ENCODE measurements at regions of chr16 and their contacts with region 1.

Region 1: GRCh38 chr16:66824006-66824405 is 6.8 kb downstream of the NAE1 start:
- DNase-seq: no peak
- H3K4me3 ChIP-seq: no peak overlapping the region
- H3K27ac ChIP-seq: no peak overlapping the region
- H3K4me1 ChIP-seq: no peaks in the 10 kb centered on the region
- H3K27me3 ChIP-seq: no peaks in the 10 kb centered on the region
- CTCF ChIP-seq: no peak
- EP300 ChIP-seq: no peak
- POLR2A ChIP-seq: no peak
- RAD21 ChIP-seq: no peak

Region 2: DNA sequence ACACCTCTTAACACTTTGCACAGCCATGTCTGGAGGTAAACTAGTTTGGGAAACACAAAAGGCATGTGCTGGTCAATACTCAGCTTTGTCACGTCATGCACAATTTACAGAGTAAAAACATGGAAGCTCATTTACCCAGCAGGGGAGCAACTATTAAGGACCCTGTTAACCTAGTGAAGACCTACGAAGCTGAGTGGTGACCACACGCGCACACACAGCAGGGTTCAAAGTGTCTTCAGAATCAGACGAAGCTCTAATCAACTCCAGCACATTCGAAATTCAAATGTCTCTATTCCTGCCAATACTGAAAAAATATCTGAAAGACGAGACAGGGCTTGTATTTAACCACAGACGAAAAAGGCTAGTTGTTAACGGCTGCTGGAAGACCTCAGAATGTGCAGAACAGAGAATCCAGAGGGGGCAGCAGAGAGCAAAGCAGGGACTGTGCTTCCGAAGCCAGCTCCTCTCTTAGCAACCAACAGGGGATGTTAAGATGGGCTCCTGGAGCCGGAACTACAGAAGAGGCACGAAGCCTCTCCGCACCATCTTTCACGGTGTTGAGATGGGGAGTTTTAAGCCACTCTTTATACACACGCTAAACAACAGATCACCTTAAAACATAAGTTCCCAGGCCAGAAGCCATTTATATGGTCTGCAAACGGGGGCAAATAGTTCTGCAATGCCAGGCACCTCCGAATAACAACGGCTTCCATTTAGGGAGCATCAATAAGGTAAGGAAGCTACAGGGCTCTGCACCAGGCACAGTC is 173.1 kb before region 1 on chr16:
- CTCF ChIA-PET with region 1: no interaction called
- POLR2A ChIA-PET with region 1: no interaction called
- DNase-seq: peak; percentile 68 to 89
- H3K4me3 ChIP-seq: peak overlapping the region in 3 of 4 experiments; percentile 5 to 47 (median 27); a peak in 4 of 8 replicates
- H3K27ac ChIP-seq: no peak overlapping the region
- H3K4me1 ChIP-seq: peaks cover 0 to 5% (median 3%) of the 10 kb centered on the region in 4 experiments; a peak in 3 of 7 replicates
- H3K27me3 ChIP-seq: no peaks in the 10 kb centered on the region
- CTCF ChIP-seq: peak; percentile 80 to 98 (median 96)
- EP300 ChIP-seq: no peak
- POLR2A ChIP-seq: no peak
- RAD21 ChIP-seq: peak; percentile 53 to 69; a peak in 3 of 4 replicates

Region 3: DNA sequence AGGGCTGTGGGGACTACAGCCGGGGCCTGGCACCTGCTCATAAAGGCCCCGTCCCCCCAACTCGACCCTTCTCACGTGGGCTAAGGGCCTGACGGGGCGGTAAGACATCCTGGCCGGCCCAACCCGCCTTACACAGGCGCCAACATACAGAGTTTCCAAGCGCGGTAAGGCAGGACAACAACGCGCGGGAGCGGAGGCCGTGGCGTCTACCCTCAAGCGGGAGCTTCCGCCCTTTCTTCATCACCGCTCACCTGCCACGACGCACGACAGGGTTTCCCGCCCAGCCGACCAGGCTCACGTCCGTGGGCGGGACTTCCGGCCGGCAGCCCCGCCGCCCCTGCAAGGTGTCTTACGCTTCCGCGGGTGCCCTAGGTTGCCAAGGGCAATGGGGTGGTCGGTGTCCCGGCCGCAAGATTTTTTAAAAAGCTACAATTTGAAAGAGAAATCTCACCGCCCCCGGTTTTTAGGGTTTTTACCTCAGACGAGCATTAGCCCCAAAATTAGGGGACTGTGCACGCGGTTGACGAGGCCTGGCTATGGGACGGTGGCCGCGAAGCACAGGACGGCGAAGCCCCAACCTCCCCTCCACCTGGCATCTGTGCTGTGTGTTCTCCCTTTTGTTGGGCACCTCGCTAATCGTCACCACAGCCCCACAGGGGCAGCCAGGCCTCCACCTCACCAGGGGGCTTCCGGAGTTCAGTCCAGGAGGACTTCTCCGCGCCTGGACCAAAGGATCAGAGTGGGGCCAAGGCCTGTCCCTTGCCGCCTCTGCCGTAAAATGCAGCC is 22.5 kb before region 1 on chr16 and contains the start of gene TERB1:
- CTCF ChIA-PET with region 1: interaction called, 5 read pairs
- POLR2A ChIA-PET with region 1: interaction called, 10 read pairs
- DNase-seq: peak in 1 of 2 experiments; percentile 52
- H3K4me3 ChIP-seq: no peak within 1 kb of the TSS
- H3K27ac ChIP-seq: no peak within 1 kb of the TSS
- H3K4me1 ChIP-seq: no peaks in the 10 kb centered on the region; a peak in 1 of 7 replicates
- H3K27me3 ChIP-seq: no peaks in the 10 kb centered on the region
- CTCF ChIP-seq: no peak
- EP300 ChIP-seq: no peak
- POLR2A ChIP-seq: no peak
- RAD21 ChIP-seq: no peak
- total RNA-seq, gene TERB1: not detected in 2 replicates

Measured in H1 (cell line).